CD8-positive, alpha-beta memory T cell (primary cell): ENCODE measurements at regions of chr9 and their contacts with region 1.

Region 1: DNA sequence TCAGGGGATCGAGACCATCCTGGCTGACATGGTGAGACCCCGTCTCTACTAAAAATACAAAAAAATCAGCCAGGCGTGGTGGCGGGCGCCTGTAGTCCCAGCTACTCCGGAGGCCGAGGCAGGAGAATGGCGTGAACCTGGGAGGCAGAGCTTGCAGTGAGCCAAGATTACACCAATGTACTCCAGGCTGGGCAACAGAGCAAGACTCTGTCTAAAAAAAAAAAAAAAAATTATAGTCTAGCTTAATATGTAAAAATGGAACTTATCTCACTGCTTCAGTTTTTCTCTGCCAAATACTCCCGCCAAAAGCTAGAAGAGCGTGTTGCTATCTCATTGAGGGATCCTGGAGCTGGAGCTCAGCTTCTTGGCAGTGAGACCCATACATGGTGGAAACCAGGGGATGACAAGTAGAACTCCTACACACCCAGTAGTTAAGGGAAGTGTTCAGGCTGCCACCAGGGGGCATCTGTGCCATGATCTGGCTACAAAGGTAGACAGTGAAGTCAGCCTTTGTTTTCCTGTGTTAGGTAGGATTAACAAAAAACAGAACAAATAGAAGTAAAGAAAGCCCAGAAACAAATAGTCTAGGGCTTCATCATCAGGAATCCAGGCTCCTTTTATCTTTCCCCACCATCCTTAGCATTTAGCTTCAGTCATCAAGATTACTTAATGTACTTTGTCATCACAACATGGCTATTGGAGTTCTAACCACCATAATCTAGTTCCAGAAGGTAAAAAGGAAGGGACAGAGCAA is 33.6 kb upstream of the GLIPR2 start:
- DNase-seq: peak; percentile 74 to 91 (median 82)
- H3K4me3 ChIP-seq: no peak overlapping the region
- H3K4me3 Mint-ChIP-seq: no peak overlapping the region
- H3K27ac ChIP-seq: no peak overlapping the region
- H3K27ac Mint-ChIP-seq: peak overlapping the region in 3 of 8 donors; percentile 60 to 75 (median 63)
- H3K4me1 ChIP-seq: peaks cover 6% of the 10 kb centered on the region
- H3K4me1 Mint-ChIP-seq: peaks cover 6 to 8% (median 7%) of the 10 kb centered on the region in 3 donors
- H3K27me3 ChIP-seq: no peaks in the 10 kb centered on the region
- H3K27me3 Mint-ChIP-seq: no peaks in the 10 kb centered on the region

Region 2: GRCh38 chr9:36053971-36054370 is 48.9 kb before region 1 on chr9:
- CTCF ChIA-PET with region 1: no interaction called
- POLR2A ChIA-PET with region 1: no interaction called
- DNase-seq: no peak
- H3K4me3 ChIP-seq: no peak overlapping the region
- H3K4me3 Mint-ChIP-seq: no peak overlapping the region
- H3K27ac ChIP-seq: no peak overlapping the region
- H3K27ac Mint-ChIP-seq: no peak overlapping the region
- H3K4me1 ChIP-seq: no peaks in the 10 kb centered on the region
- H3K4me1 Mint-ChIP-seq: no peaks in the 10 kb centered on the region
- H3K27me3 ChIP-seq: no peaks in the 10 kb centered on the region
- H3K27me3 Mint-ChIP-seq: no peaks in the 10 kb centered on the region

Region 3: DNA sequence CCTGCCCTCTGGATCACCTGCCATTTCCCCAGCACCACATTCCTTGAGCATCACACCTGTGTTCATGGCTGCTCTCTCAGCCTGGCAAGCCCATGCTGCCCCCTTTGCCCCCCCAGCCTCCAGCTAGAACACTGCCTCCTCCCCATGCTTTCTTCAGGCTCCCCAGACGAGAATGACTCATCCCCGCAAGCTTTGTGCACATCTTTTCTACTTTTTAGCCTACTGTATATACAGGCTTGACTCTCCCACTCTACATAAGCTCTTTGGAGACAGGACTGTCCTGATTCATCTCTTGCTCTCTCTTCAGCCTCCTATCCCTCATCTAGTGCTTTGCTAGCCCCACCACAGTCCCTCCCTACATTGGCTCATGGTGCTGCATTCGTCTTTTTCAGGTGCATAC is 13.7 kb after region 1 on chr9:
- CTCF ChIA-PET with region 1: interaction called, 13 read pairs
- POLR2A ChIA-PET with region 1: no interaction called
- DNase-seq: no peak
- H3K4me3 ChIP-seq: no peak overlapping the region
- H3K4me3 Mint-ChIP-seq: no peak overlapping the region
- H3K27ac ChIP-seq: no peak overlapping the region
- H3K27ac Mint-ChIP-seq: peak overlapping the region in 1 of 8 donors; percentile 87
- H3K4me1 ChIP-seq: no peaks in the 10 kb centered on the region
- H3K4me1 Mint-ChIP-seq: no peaks in the 10 kb centered on the region
- H3K27me3 ChIP-seq: no peaks in the 10 kb centered on the region
- H3K27me3 Mint-ChIP-seq: no peaks in the 10 kb centered on the region

Region 4: DNA sequence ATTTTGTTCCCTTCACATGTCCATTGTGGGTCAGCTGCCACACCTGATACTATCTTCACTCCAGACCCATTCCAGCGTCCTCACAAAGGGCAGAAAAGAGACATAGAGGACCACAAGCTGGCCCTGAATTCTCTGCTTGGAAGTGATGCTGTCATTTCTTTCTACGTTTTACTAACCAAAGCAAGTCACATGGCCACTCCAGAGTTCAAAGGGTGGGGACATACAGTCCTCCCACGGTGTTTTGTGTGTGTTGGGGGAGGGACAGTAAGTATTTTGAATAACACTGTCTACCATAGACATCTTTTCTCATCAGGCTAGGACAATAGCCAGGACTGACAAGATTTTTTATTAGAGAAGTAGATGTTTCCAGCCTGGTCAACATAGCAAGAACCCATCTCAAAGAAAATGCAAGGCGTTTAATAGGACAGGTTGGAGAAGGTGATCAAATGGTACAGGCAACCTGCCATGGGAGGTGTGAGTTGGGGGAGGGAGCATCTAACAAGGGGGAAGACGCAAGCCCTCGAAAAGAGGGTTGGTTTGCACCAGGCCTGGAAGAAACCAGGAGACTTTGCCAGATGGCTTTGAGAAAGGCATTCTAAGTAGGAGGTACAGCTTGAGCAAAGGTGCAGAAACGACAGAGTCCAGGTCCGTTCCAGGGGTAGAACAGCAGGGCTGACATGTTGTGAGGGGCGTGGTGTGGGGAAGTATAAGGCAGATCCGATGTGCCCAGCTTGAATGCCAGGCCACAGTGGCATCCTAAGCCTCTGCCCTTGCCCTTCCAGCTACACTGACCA is 22.3 kb after region 1 on chr9:
- CTCF ChIA-PET with region 1: interaction called, 13 read pairs
- POLR2A ChIA-PET with region 1: no interaction called
- DNase-seq: no peak
- H3K4me3 ChIP-seq: no peak overlapping the region
- H3K4me3 Mint-ChIP-seq: no peak overlapping the region
- H3K27ac ChIP-seq: no peak overlapping the region
- H3K27ac Mint-ChIP-seq: peak overlapping the region in 7 of 8 donors; percentile 3 to 79 (median 52)
- H3K4me1 ChIP-seq: peaks cover 15% of the 10 kb centered on the region
- H3K4me1 Mint-ChIP-seq: peaks cover 21 to 41% (median 30%) of the 10 kb centered on the region in 3 donors
- H3K27me3 ChIP-seq: no peaks in the 10 kb centered on the region
- H3K27me3 Mint-ChIP-seq: no peaks in the 10 kb centered on the region

Region 5: GRCh38 chr9:36136272-36136893 is 33.5 kb after region 1 on chr9 and contains the start of gene GLIPR2:
- CTCF ChIA-PET with region 1: interaction called, 25 read pairs
- POLR2A ChIA-PET with region 1: interaction called, 6 read pairs
- DNase-seq: peak; percentile 72 to 85 (median 76)
- H3K4me3 ChIP-seq: peak within 1 kb of the TSS; percentile 86
- H3K4me3 Mint-ChIP-seq: peak within 1 kb of the TSS; percentile 87 to 99 (median 96)
- H3K27ac ChIP-seq: peak within 1 kb of the TSS; percentile 69
- H3K27ac Mint-ChIP-seq: peak within 1 kb of the TSS; percentile 85 to 99 (median 98)
- H3K4me1 ChIP-seq: peaks cover 52% of the 10 kb centered on the region
- H3K4me1 Mint-ChIP-seq: peaks cover 48 to 54% (median 52%) of the 10 kb centered on the region in 3 donors
- H3K27me3 ChIP-seq: no peaks in the 10 kb centered on the region
- H3K27me3 Mint-ChIP-seq: no peaks in the 10 kb centered on the region
- total RNA-seq, gene GLIPR2: 17.1 to 17.5 TPM

Region 6: GRCh38 chr9:36148311-36149051 is 45.6 kb after region 1 on chr9:
- CTCF ChIA-PET with region 1: interaction called, 29 read pairs
- POLR2A ChIA-PET with region 1: no interaction called
- DNase-seq: peak; percentile 40 to 89 (median 67)
- H3K4me3 ChIP-seq: no peak overlapping the region
- H3K4me3 Mint-ChIP-seq: peak overlapping the region in 5 of 7 donors; percentile 47 to 75 (median 61)
- H3K27ac ChIP-seq: no peak overlapping the region
- H3K27ac Mint-ChIP-seq: peak overlapping the region; percentile 77 to 97 (median 92)
- H3K4me1 ChIP-seq: peaks cover 96% of the 10 kb centered on the region
- H3K4me1 Mint-ChIP-seq: peaks cover 85 to 96% (median 90%) of the 10 kb centered on the region in 3 donors
- H3K27me3 ChIP-seq: no peaks in the 10 kb centered on the region
- H3K27me3 Mint-ChIP-seq: peaks cover 0 to 3% of the 10 kb centered on the region in 2 donors

Region 7: GRCh38 chr9:36166101-36166927 is 63.4 kb after region 1 on chr9:
- CTCF ChIA-PET with region 1: interaction called, 278 read pairs
- POLR2A ChIA-PET with region 1: interaction called, 7 read pairs
- DNase-seq: peak; percentile 77 to 82 (median 79)
- H3K4me3 ChIP-seq: peak overlapping the region; percentile 64
- H3K4me3 Mint-ChIP-seq: peak overlapping the region; percentile 60 to 90 (median 81)
- H3K27ac ChIP-seq: no peak overlapping the region
- H3K27ac Mint-ChIP-seq: peak overlapping the region in 7 of 8 donors; percentile 30 to 92 (median 69)
- H3K4me1 ChIP-seq: no peaks in the 10 kb centered on the region
- H3K4me1 Mint-ChIP-seq: peaks cover 6 to 21% (median 13%) of the 10 kb centered on the region in 3 donors
- H3K27me3 ChIP-seq: no peaks in the 10 kb centered on the region
- H3K27me3 Mint-ChIP-seq: peaks cover 0 to 4% of the 10 kb centered on the region in 2 donors

Region 8: DNA sequence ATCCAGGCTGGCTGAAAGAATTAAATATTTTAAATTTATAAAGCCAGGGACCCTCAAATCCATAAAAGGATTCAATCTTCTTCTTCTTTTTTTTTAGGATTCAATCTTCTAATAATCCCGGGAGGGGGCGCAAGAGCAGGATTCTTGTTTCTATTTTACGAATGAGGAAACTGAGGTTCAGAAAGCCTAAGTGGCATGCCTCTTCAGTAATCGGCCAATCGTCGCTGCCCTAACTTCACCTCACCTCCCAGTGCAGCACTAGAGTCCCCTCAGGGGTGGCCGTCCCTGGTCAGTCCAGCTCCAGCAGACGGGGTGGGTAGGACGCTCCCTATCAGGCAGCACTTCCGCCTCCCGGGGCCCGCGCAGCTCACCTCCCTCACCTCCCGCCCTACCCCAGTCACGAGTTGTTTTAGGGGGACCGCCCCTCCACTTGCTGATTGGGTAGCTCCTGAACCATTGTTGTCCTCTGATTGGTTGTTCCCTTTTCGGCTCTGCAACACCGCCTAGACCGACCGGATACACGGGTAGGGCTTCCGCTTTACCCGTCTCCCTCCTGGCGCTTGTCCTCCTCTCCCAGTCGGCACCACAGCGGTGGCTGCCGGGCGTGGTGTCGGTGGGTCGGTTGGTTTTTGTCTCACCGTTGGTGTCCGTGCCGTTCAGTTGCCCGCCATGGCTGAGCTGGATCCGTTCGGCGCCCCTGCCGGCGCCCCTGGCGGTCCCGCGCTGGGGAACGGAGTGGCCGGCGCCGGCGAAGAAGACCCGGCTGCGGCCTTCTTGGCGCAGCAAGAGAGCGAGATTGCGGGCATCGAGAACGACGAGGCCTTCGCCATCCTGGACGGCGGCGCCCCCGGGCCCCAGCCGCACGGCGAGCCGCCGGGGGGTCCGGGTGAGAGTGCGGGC is 87.7 kb after region 1 on chr9 and contains the start of gene CLTA:
- CTCF ChIA-PET with region 1: interaction called, 15 read pairs
- POLR2A ChIA-PET with region 1: no interaction called
- DNase-seq: peak; percentile 90 to 96 (median 95)
- H3K4me3 ChIP-seq: peak within 1 kb of the TSS; percentile 82
- H3K4me3 Mint-ChIP-seq: peak within 1 kb of the TSS; percentile 91 to 97 (median 95)
- H3K27ac ChIP-seq: peak within 1 kb of the TSS; percentile 90
- H3K27ac Mint-ChIP-seq: peak within 1 kb of the TSS; percentile 83 to 98 (median 95)
- H3K4me1 ChIP-seq: peaks cover 41% of the 10 kb centered on the region
- H3K4me1 Mint-ChIP-seq: peaks cover 49 to 54% (median 53%) of the 10 kb centered on the region in 3 donors
- H3K27me3 ChIP-seq: no peaks in the 10 kb centered on the region
- H3K27me3 Mint-ChIP-seq: peaks cover 0 to 4% of the 10 kb centered on the region in 2 donors
- total RNA-seq, gene CLTA: 185 to 186 TPM